ENCODE measurements at regions of chr2 and their contacts with region 1.

Region 1: DNA sequence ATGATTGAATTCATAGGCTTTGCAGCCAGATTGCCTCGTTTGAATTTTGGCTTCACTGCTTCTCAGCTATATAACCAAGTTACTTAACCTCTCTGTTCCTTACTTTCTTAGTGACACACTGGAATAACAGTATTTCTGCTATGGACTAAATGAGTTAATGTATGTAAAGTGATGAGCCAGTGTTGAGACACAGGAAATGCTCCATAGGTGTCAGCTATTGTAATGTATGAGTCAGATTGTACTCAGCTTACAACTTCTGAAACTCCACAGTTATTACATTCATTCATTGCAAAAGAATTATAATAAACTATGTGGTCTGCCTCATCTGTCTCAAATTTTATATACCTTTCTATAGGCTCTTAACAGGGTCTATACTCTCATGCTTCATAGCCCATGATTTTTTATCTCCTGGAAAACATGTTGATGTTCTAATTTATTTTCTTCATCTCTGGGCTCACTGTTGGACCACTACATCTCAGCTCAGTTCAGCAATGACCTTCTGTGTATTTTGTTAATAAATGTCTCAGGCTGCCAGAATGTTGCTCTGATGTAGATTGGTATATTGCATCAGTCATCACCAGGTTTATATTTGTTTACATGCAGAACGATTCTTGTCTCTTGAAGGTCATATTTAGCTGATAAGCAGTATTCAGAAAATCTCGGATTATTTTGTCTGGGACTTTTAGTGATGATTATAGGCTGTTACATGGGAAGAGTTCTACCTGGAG is 76.2 kb downstream of the MAP3K20 start:
- DNase-seq: no peak
- ATAC-seq: peak; percentile 90
- H3K4me3 Mint-ChIP-seq: no peak overlapping the region
- H3K27ac Mint-ChIP-seq: no peak overlapping the region
- H3K4me1 Mint-ChIP-seq: peaks cover 39% of the 10 kb centered on the region
- H3K27me3 Mint-ChIP-seq: peaks cover 21% of the 10 kb centered on the region

Region 2: GRCh38 chr2:172972005-172972619 is 179.7 kb before region 1 on chr2:
- CTCF ChIA-PET with region 1: no interaction called
- POLR2A ChIA-PET with region 1: no interaction called
- intact Hi-C with region 1: loop called in 1 of 2 experiments (anchors 5 kb)
- DNase-seq: peak; percentile 71
- ATAC-seq: peak; percentile 73
- H3K4me3 Mint-ChIP-seq: no peak overlapping the region
- H3K27ac Mint-ChIP-seq: no peak overlapping the region
- H3K4me1 Mint-ChIP-seq: peaks cover 34% of the 10 kb centered on the region
- H3K27me3 Mint-ChIP-seq: no peaks in the 10 kb centered on the region

Region 3: GRCh38 chr2:173075781-173076580 is 75.9 kb before region 1 on chr2 and contains the start of gene MAP3K20:
- CTCF ChIA-PET with region 1: no interaction called
- POLR2A ChIA-PET with region 1: no interaction called
- intact Hi-C with region 1: loop called (anchors 1 to 2 kb)
- DNase-seq: peak; percentile 73
- ATAC-seq: peak; percentile 85
- H3K4me3 Mint-ChIP-seq: peak within 1 kb of the TSS; percentile 76
- H3K27ac Mint-ChIP-seq: peak within 1 kb of the TSS; percentile 76
- H3K4me1 Mint-ChIP-seq: peaks cover 22% of the 10 kb centered on the region
- H3K27me3 Mint-ChIP-seq: peaks cover 33% of the 10 kb centered on the region
- total RNA-seq, gene MAP3K20: 8.1 to 8.4 TPM

Region 4: DNA sequence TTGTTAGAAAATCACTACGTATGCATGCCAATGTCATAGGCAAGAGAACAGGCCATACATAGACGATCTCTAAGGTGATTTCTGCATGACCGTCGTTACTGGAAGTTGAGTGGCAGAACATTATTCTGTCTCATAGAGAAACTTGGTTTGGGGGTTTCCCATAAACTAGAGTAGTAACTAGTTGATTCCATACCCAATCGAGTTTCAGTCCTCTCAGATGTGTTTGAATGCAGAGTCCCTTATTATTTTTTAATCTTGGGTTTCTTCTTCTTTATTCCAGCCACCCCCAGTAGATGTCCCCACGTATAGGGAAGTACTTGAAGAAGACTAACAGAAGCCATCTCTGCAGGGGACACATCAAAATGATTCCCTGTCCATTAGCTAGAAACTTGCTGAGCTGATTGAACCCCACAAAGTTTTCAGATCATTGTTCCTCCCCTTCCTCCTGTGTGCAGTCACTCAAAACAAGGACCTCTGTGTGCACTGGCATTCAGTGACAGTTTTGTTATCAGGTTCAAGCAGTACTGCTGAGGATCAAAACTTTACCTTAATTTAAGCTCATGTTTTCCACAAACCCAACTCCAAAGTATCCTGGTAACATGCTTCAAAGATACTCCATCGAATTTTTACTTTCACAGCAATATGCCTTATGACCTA is 134.4 kb after region 1 on chr2:
- CTCF ChIA-PET with region 1: interaction called, 4 read pairs
- POLR2A ChIA-PET with region 1: interaction called, 4 read pairs
- intact Hi-C with region 1: loop called in 1 of 2 experiments (anchors 2 kb)
- DNase-seq: peak; percentile 20
- ATAC-seq: peak; percentile 86
- H3K4me3 Mint-ChIP-seq: no peak overlapping the region
- H3K27ac Mint-ChIP-seq: peak overlapping the region; percentile 60
- H3K4me1 Mint-ChIP-seq: peaks cover 16% of the 10 kb centered on the region
- H3K27me3 Mint-ChIP-seq: peaks cover 3% of the 10 kb centered on the region

Region 5: GRCh38 chr2:173354601-173355131 is 202.8 kb after region 1 on chr2 and contains the start of gene CDCA7:
- CTCF ChIA-PET with region 1: no interaction called
- POLR2A ChIA-PET with region 1: interaction called, 3 read pairs
- intact Hi-C with region 1: loop called in 1 of 2 experiments (anchors 5 kb)
- DNase-seq: peak; percentile 86
- ATAC-seq: peak; percentile 68
- H3K4me3 Mint-ChIP-seq: peak within 1 kb of the TSS; percentile 87
- H3K27ac Mint-ChIP-seq: peak within 1 kb of the TSS; percentile 97
- H3K4me1 Mint-ChIP-seq: peaks cover 37% of the 10 kb centered on the region
- H3K27me3 Mint-ChIP-seq: peaks cover 46% of the 10 kb centered on the region
- total RNA-seq, gene CDCA7: 80.4 to 88.2 TPM

Measured in activated CD4-positive, alpha-beta T cell treated with anti-CD3 and anti-CD28 coated beads for 36 hours (primary cell).